RWPE1 (cell line): ENCODE measurements at regions of chr12 and their contacts with region 1.

Region 1: DNA sequence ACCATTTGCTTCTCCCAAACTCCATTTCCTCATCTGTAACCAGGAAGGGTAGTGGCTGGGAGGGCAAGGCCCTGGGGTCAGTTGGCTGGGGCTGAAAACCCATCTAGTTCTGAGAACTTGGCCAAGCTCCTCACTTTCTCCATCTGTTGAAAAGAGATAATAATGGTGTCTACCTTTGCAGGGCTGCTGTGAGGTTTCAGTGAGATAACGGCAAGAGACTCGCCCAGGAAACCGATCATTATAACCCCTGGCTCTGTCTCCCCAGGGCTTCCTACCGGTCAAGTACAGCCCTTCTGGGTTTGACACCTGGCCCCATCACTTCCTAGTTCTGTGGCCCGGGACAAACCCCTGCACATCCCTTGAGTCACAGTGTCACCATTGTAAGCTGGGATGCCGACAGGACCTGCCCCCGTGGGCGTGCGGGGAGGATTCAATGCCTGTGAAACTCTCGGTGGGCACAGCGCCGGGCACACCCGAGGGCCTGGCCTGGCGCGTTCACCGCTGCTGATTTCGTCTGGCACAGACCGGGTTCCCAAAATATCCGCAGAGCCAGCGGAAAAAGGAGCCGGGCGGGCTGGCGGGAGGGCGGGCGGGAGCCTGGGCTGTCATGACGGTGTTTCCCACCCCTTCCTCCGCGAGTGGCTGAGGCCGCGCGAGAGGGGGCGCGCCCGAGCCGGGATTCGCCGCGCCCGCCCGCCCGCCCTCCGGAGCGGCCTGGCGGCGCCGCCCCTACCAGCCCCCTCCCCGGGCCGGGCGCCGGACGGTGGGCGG is 4.4 kb downstream of the KMT5A start:
- DNase-seq: peak; percentile 87
- H3K27ac ChIP-seq: peak overlapping the region; percentile 87
- CTCF ChIP-seq: no peak

Region 2: GRCh38 chr12:123354600-123354999 is 33.8 kb before region 1 on chr12:
- CTCF ChIA-PET with region 1: interaction called, 10 read pairs
- POLR2A ChIA-PET with region 1: no interaction called
- DNase-seq: no peak
- H3K27ac ChIP-seq: no peak overlapping the region
- CTCF ChIP-seq: no peak

Region 3: GRCh38 chr12:123427036-123427769 is 38.8 kb after region 1 on chr12:
- CTCF ChIA-PET with region 1: no interaction called
- POLR2A ChIA-PET with region 1: interaction called, 12 read pairs
- DNase-seq: no peak
- H3K27ac ChIP-seq: no peak overlapping the region
- CTCF ChIP-seq: no peak